Testis (tissue), 5 donors: ENCODE measurements at regions of chr18 and their contacts with region 1.

Region 1: DNA sequence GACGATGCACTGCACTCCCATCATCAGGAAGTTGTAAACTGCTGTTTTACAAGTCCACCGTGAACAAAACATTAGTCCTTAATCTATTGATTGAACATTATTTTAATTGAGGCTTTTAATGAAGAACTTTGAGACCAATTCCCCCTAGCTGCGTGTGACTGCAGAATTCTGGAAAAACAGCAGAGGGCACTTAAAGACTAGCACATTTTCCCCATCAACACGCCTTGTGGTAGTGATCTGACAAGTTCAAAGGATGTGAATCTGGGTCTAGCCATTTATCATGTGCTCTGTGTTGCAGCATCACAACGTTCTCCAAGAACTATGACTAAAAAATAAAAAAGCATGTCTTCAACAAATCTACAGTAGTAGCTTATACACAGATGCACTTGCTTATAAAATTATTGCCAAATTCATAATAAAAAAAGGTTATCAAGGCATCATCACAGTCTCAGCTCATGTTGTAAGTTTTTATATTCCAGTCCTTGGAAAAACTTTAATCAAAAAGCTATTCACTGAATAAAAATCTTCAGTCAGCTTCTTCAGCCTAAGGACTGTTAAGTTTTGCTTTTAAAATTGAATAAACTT is 35.8 kb downstream of the SKOR2 start:
- DNase-seq: peak; percentile 28
- H3K4me3 ChIP-seq: no peak overlapping the region
- H3K27ac ChIP-seq: no peak overlapping the region
- H3K4me1 ChIP-seq: no peaks in the 10 kb centered on the region
- H3K27me3 ChIP-seq: no peaks in the 10 kb centered on the region
- CTCF ChIP-seq: peak in 2 of 3 experiments; percentile 28 to 40
- POLR2A ChIP-seq: no peak

Region 2: DNA sequence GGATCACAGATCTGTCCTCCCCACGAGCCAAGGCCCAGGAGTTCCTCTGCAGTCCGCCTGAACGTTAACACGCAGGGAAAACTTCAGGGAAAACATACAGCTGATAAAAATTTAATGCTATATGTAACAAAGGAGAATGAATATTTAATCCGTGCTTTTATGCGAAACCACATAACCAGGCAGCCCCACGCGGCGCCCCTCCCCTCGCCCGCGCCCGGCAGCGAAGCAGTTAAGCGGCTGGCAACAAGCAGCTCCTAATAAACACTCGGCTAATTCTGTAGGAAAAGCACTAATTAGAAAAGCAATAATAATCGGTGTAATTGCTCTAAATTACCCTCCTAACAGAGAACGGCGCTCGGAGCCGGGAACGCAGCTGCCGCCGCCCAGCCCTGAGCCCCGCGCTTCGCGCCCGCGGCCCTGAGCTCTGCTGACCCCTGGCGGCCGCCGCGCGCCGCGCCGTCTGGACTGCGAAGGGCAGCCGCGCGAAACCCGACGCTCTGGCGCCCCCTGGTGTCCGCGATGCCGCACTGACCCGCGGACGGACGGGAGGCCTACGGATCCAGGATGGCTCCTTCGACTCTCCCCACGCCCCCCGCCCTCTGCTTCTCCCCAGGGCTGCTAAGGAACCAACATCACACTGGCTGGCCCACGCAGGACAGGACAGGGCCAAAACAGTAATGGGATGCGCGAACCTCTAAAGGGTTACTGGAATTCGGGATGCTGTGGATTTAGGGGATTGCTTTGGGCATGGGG is 533.4 kb after region 1 on chr18:
- intact Hi-C with region 1: loop called (anchors 10 kb)
- DNase-seq: peak; percentile 83
- H3K4me3 ChIP-seq: peak overlapping the region; percentile 45 to 57
- H3K27ac ChIP-seq: no peak overlapping the region
- H3K4me1 ChIP-seq: no peaks in the 10 kb centered on the region
- H3K27me3 ChIP-seq: no peaks in the 10 kb centered on the region
- CTCF ChIP-seq: peak; percentile 100
- POLR2A ChIP-seq: no peak